ENCODE measurements at regions of chr1 and their contacts with region 1.

Region 1: GRCh38 chr1:19186001-19186400 is 24.1 kb downstream of the UBR4 start:
- DNase-seq: peak; percentile 29
- ATAC-seq: peak; percentile 96
- H3K4me3 Mint-ChIP-seq: no peak overlapping the region
- H3K27ac Mint-ChIP-seq: peak overlapping the region; percentile 89
- H3K4me1 Mint-ChIP-seq: peaks cover 37% of the 10 kb centered on the region
- H3K27me3 Mint-ChIP-seq: no peaks in the 10 kb centered on the region

Region 2: GRCh38 chr1:19010995-19011844 is 174.8 kb before region 1 on chr1:
- CTCF ChIA-PET with region 1: no interaction called
- POLR2A ChIA-PET with region 1: no interaction called
- intact Hi-C with region 1: loop called in 1 of 2 experiments (anchors 1 kb)
- DNase-seq: peak; percentile 93
- ATAC-seq: peak; percentile 97
- H3K4me3 Mint-ChIP-seq: peak overlapping the region; percentile 12
- H3K27ac Mint-ChIP-seq: peak overlapping the region; percentile 87
- H3K4me1 Mint-ChIP-seq: peaks cover 36% of the 10 kb centered on the region
- H3K27me3 Mint-ChIP-seq: peaks cover 2% of the 10 kb centered on the region

Region 3: GRCh38 chr1:19169642-19170041 is 16.4 kb before region 1 on chr1:
- CTCF ChIA-PET with region 1: interaction called, 6 read pairs
- POLR2A ChIA-PET with region 1: interaction called, 3 read pairs
- intact Hi-C with region 1: loop called in 1 of 2 experiments (anchors 1 kb)
- DNase-seq: no peak
- ATAC-seq: peak; percentile 95
- H3K4me3 Mint-ChIP-seq: no peak overlapping the region
- H3K27ac Mint-ChIP-seq: peak overlapping the region; percentile 96
- H3K4me1 Mint-ChIP-seq: peaks cover 22% of the 10 kb centered on the region
- H3K27me3 Mint-ChIP-seq: no peaks in the 10 kb centered on the region

Region 4: DNA sequence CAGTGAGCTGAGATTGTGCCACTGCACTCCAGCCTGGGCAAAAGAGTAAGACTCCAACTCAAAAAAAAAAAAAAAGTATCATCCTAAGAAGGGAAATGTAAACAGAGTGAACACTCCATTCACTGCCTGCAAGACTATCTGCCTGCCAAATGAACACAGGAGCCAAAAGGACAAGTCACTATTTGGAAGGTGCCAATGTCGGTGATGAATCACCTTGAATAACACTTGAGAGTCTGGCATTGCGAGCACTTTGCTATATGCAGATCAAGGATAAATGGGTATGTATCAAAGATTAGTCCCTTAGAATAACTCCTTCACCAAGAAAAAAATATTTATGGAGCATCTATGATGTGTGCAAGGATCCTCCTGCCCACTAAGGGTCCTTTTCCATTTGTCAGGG is 17.4 kb after region 1 on chr1:
- CTCF ChIA-PET with region 1: interaction called, 7 read pairs
- POLR2A ChIA-PET with region 1: interaction called, 3 read pairs
- intact Hi-C with region 1: loop called in 1 of 2 experiments (anchors 2 kb)
- DNase-seq: no peak
- ATAC-seq: peak; percentile 47
- H3K4me3 Mint-ChIP-seq: no peak overlapping the region
- H3K27ac Mint-ChIP-seq: no peak overlapping the region
- H3K4me1 Mint-ChIP-seq: peaks cover 62% of the 10 kb centered on the region
- H3K27me3 Mint-ChIP-seq: no peaks in the 10 kb centered on the region